ENCODE measurements at regions of chr3 and their contacts with region 1.

Region 1: GRCh38 chr3:97719156-97719821 is 45.3 kb upstream of the ARL6 start:
- DNase-seq: peak; percentile 65
- ATAC-seq: peak; percentile 72

Region 2: GRCh38 chr3:96863129-96863740 is 856.1 kb before region 1 on chr3:
- intact Hi-C with region 1: loop called (anchors 5 kb)
- DNase-seq: no peak
- ATAC-seq: no peak

Region 3: DNA sequence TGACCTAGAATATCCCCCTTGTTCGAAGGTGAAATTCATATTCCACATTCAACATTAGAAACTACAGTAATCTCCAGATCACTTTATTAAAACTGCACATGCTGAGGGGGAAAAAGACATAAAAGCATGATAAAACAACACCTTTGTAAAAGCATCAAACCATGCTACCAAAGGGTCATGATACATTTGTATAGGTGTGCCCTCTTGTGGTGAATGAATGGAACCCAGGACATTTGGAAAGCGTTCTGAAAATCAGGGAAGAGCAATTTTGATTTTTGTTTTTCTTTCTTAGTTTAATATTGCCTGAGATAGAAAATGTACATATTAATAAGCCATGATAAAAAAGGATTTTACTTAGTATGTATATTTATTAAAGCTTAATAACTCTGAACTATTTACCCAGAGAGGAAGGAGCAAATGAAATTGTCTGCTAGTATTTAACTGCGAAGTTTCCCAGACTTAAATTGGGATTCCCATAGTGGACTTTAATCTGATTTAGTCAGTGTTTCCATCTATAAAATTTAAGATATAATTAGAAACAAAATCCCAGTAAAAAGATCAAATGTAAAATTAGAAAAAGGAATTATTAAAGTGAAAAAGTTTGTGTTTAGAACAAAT is 60.5 kb before region 1 on chr3:
- intact Hi-C with region 1: no loop called
- DNase-seq: no peak
- ATAC-seq: no peak